ENCODE measurements at regions of chr3 and their contacts with region 1.

Region 1: DNA sequence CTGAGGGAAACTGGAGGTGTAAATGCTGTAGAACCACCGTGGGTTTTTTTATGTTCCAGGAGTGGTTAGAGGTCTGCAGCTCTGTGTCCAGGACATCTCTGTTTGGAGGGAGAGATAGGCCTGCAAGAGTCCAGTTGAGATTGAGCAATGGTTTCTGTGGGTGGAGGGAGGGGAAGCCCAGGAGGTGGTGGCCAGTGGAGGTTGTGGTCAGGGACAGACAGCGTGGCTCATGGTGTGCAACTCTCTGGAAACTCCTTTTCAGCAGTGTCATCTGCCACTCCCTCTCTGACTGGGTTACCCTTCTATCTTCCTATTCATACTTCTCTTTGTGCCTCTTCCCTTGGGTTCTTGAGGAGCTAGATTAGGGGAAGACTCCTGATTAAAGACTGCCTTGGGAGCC is 9.6 kb downstream of the XCR1 start:
- DNase-seq: peak; percentile 85 to 97 (median 86)
- H3K4me3 ChIP-seq: peak overlapping the region in 1 of 3 experiments; percentile 5
- H3K4me3 Mint-ChIP-seq: peak overlapping the region in 1 of 2 donors; percentile 63
- H3K27ac ChIP-seq: peak overlapping the region; percentile 26 to 82
- H3K27ac Mint-ChIP-seq: peak overlapping the region; percentile 88 to 98 (median 93)
- H3K4me1 ChIP-seq: peaks cover 43 to 44% of the 10 kb centered on the region in 2 donors
- H3K4me1 Mint-ChIP-seq: peaks cover 45% of the 10 kb centered on the region
- H3K27me3 ChIP-seq: no peaks in the 10 kb centered on the region
- H3K27me3 Mint-ChIP-seq: peaks cover 0 to 8% (median 3%) of the 10 kb centered on the region in 3 donors
- CTCF ChIP-seq: no peak

Region 2: DNA sequence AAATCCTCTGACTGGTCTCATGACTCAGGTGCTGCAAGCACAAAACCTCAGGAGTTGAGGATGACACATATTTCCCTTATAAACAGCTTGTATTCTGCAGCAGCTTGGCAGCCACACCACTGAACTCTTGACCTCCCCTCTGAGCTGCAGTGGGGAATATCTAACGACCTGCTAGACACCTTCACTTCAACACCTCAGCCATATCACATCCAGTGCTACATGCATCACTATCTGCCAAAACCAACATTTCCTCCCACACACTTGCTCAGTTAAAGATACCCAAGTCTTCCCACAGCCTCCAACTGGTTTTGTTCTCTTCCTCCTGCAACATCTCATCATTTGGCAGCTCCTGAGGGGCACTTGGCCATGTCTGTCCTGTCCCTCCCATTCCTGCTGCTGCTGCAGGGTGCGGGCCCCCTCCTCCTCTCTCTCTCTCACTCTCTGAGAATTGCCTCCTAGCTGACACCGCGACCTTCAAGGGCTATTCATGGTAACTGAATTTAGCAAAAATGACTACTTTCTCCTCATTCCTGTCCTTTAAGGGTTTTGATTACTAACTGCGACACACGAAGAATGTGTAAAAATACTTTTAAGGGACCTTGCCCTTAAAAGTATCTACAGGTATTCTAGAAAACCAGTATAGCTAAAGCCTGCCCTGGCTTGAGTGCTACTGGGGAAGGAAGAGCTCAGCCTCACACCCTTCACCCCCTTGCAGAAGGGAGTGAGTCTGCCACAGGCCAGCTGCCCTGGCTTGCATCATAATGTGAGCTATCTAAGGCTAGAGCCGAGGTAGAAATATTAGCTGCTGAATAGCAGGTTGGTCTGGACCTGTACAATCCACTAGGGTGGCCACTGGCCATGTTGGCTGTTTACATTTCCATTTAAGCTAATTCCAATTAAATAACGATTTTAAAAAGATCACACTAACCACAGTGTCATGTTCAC is 136.4 kb before region 1 on chr3:
- intact Hi-C with region 1: no loop called
- DNase-seq: no peak
- H3K4me3 ChIP-seq: no peak overlapping the region
- H3K4me3 Mint-ChIP-seq: no peak overlapping the region
- H3K27ac ChIP-seq: no peak overlapping the region
- H3K27ac Mint-ChIP-seq: no peak overlapping the region
- H3K4me1 ChIP-seq: no peaks in the 10 kb centered on the region
- H3K4me1 Mint-ChIP-seq: no peaks in the 10 kb centered on the region
- H3K27me3 ChIP-seq: no peaks in the 10 kb centered on the region
- H3K27me3 Mint-ChIP-seq: peaks cover 0 to 8% (median 3%) of the 10 kb centered on the region in 3 donors
- CTCF ChIP-seq: no peak

Region 3: GRCh38 chr3:46065294-46065721 is 47.6 kb after region 1 on chr3:
- intact Hi-C with region 1: loop called (anchors 5 to 10 kb)
- DNase-seq: no peak
- H3K4me3 ChIP-seq: no peak overlapping the region
- H3K4me3 Mint-ChIP-seq: no peak overlapping the region
- H3K27ac ChIP-seq: no peak overlapping the region
- H3K27ac Mint-ChIP-seq: no peak overlapping the region
- H3K4me1 ChIP-seq: peaks cover 34 to 35% of the 10 kb centered on the region in 2 donors
- H3K4me1 Mint-ChIP-seq: peaks cover 42% of the 10 kb centered on the region
- H3K27me3 ChIP-seq: no peaks in the 10 kb centered on the region
- H3K27me3 Mint-ChIP-seq: peaks cover 3 to 7% (median 6%) of the 10 kb centered on the region in 3 donors
- CTCF ChIP-seq: no peak

Region 4: GRCh38 chr3:46070595-46071093 is 52.9 kb after region 1 on chr3:
- intact Hi-C with region 1: loop called (anchors 5 to 10 kb)
- DNase-seq: no peak
- H3K4me3 ChIP-seq: no peak overlapping the region
- H3K4me3 Mint-ChIP-seq: no peak overlapping the region
- H3K27ac ChIP-seq: no peak overlapping the region
- H3K27ac Mint-ChIP-seq: peak overlapping the region in 4 of 7 donors; percentile 10 to 35 (median 20)
- H3K4me1 ChIP-seq: peaks cover 0 to 12% of the 10 kb centered on the region in 2 donors
- H3K4me1 Mint-ChIP-seq: peaks cover 24% of the 10 kb centered on the region
- H3K27me3 ChIP-seq: no peaks in the 10 kb centered on the region
- H3K27me3 Mint-ChIP-seq: peaks cover 3 to 8% (median 7%) of the 10 kb centered on the region in 3 donors
- CTCF ChIP-seq: no peak